A549 (cell line): ENCODE measurements at regions of chr14 and their contacts with region 1.

Region 1: GRCh38 chr14:96391293-96392118 is 422 bp upstream of the AK7 start:
- DNase-seq: peak; percentile 84 to 96
- ATAC-seq: peak; percentile 95
- H3K4me3 ChIP-seq: peak overlapping the region; percentile 73
- H3K27ac ChIP-seq: peak overlapping the region; percentile 84 to 88
- H3K4me1 ChIP-seq: peaks cover 2% of the 10 kb centered on the region; the same call in 1 of the 3 replicates
- CTCF ChIP-seq: no peak
- EP300 ChIP-seq: no peak
- POLR2A ChIP-seq: peak; percentile 90
- RAD21 ChIP-seq: no peak

Region 2: DNA sequence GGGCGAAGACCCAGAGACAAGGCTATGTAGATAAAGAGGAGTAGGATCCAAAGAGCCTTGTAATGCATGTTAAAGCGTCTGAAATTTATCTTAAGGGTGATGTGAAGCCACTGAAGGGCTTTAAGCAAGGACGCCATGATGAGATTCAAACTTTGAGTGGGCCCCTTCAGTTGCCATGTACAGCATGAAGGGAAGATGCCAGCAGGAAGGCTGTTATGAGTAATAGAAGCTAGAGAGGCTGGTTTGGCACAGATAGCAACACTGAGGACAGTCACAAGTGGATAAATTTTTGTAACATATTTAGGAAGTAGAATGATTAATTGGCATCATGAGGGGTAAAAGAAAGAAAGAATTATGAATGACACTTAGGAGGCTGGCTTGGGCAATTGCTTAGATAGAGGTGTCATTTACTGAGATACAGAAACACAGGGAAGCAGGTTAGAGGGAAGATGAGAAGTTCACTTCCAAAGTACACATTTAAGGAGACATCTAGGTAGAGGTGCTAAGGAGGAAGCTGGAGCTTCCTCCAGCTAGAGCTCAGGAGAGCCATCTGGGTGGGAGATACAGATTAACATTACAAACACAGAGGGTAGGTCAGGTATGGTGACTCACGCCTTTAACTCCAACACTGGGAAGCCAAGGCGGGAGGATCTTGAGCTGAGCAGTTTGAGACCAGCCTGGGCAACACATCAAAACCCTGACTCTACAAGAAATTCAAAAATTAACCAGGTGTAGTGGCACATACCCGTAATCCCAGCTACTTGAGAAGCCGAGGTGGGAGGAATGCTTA is 42.0 kb before region 1 on chr14:
- CTCF ChIA-PET with region 1: no interaction called
- POLR2A ChIA-PET with region 1: no interaction called
- DNase-seq: no peak
- ATAC-seq: peak; percentile 19 to 28; a peak in 1 of 6 replicates
- H3K4me3 ChIP-seq: no peak overlapping the region
- H3K27ac ChIP-seq: no peak overlapping the region
- H3K4me1 ChIP-seq: no peaks in the 10 kb centered on the region; the same call in 2 of the 3 replicates
- CTCF ChIP-seq: no peak
- EP300 ChIP-seq: no peak
- POLR2A ChIP-seq: no peak
- RAD21 ChIP-seq: no peak

Region 3: DNA sequence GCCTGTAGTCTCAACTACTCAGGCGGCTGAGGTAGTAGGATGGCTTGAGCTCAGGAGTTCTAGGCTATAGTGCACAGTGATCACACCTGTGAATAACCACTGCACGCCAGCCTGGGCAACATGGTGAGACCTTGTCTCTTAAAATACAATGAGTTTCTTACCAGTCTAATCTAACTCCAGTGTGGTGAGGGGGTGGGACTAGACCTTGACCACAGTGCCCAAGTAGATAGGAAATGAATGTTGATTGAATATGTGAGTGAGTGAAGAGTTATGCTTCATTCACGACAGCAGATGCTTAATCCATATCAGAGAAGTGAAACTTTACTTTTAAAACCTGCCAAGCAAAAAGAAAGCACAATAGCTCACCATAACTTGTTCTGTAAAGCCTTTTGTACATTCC is 10.8 kb before region 1 on chr14:
- CTCF ChIA-PET with region 1: interaction called, 20 read pairs
- POLR2A ChIA-PET with region 1: no interaction called
- DNase-seq: no peak
- ATAC-seq: no peak
- H3K4me3 ChIP-seq: no peak overlapping the region
- H3K27ac ChIP-seq: no peak overlapping the region
- H3K4me1 ChIP-seq: peaks cover 5% of the 10 kb centered on the region; the same call in 1 of the 3 replicates
- CTCF ChIP-seq: no peak
- EP300 ChIP-seq: no peak
- POLR2A ChIP-seq: no peak
- RAD21 ChIP-seq: no peak

Region 4: DNA sequence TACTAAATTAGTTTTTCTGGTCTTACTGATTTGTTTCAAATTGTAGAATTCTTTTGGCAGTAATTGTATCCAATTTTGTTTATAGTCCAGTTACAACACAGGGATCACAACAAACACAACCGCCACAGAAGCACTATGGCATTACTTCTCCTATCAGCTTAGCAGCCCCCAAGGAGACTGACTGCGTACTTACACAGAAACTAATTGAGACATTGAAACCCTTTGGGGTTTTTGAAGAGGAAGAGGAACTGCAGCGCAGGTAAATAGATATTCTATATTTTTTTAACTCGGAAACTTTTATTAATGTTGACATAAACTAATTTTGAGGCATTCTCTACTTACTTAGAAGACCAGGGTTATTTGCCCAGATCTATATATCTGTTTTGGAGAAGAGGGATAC is 128.5 kb after region 1 on chr14:
- CTCF ChIA-PET with region 1: no interaction called
- POLR2A ChIA-PET with region 1: no interaction called
- DNase-seq: no peak
- ATAC-seq: no peak
- H3K4me3 ChIP-seq: no peak overlapping the region
- H3K27ac ChIP-seq: no peak overlapping the region
- H3K4me1 ChIP-seq: peaks cover 16% of the 10 kb centered on the region
- CTCF ChIP-seq: no peak
- EP300 ChIP-seq: no peak
- POLR2A ChIP-seq: no peak
- RAD21 ChIP-seq: no peak

Region 5: DNA sequence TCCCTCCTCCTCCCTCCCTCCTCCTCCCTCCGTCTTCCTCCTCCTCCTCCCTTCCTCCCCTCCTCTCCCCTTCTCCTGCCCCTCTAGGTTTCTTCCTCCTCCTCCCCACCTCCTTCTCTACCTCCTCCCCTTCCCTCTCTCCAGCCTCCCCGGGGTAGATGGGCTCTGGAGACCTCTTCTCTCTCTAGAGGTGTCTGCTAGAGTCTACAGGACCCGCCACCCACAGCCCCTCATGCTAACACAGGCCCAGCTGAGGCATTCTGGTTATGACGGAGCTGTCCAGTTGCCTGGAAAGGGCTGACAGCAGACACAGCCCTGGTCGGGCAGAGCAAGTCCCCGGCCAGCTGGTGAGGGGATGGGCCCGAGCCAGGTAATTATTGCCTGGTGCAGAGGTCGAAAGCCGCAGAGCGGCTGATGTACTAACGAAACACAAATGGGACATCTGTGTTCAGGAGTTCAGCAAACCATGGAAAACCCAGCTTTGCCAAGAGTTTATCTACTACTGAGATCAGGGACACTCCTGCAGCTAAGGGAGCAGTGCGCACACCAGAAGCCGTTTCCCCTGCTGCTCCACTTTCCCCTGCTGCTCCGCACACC is 206.9 kb after region 1 on chr14:
- CTCF ChIA-PET with region 1: no interaction called
- POLR2A ChIA-PET with region 1: no interaction called
- DNase-seq: no peak
- ATAC-seq: no peak; a peak in 2 of 6 replicates
- H3K4me3 ChIP-seq: no peak overlapping the region
- H3K27ac ChIP-seq: no peak overlapping the region
- H3K4me1 ChIP-seq: no peaks in the 10 kb centered on the region; the same call in 2 of the 3 replicates
- CTCF ChIP-seq: no peak
- EP300 ChIP-seq: no peak
- POLR2A ChIP-seq: no peak
- RAD21 ChIP-seq: no peak